ENCODE measurements at regions of chr2 and their contacts with region 1.

Region 1: GRCh38 chr2:190648289-190649034 is 421 bp upstream of the NAB1 start:
- DNase-seq: peak; percentile 91 to 94
- ATAC-seq: peak; percentile 93 to 97 (median 96)
- H3K4me3 ChIP-seq: peak overlapping the region; percentile 79 to 95 (median 90)
- H3K27ac ChIP-seq: peak overlapping the region; percentile 71 to 99 (median 96)
- H3K4me1 ChIP-seq: peaks cover 0 to 74% (median 32%) of the 10 kb centered on the region in 9 donors
- H3K27me3 ChIP-seq: no peaks in the 10 kb centered on the region
- CTCF ChIP-seq: no peak

Region 2: DNA sequence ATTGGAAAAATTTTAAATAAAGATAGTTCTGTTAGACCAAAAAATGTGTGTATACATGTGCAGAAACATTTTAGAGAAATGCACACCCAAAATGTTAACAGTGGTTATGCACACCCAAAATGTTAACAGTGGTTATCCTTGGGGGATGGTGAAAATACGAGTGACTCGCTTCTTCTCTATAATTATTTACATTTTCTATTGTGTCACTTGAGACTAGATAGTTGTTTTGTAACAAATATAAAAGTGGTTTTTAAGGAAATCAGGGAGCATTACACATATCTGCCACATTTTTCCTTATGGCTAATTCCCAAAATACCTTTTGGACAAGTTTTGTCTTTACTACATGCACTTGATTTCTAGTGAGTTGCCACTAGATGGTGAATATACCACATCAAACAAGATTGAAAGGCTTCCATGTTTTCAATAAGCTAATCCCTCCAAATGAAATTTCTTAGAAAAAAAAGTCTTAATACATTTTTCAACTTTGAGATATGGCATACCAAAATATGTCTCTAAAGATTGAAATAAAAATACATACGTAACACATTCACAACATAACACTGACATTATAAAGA is 319.8 kb before region 1 on chr2:
- intact Hi-C with region 1: no loop called
- DNase-seq: no peak
- ATAC-seq: no peak
- H3K4me3 ChIP-seq: no peak overlapping the region
- H3K27ac ChIP-seq: no peak overlapping the region
- H3K4me1 ChIP-seq: peaks cover 0 to 6% (median 0%) of the 10 kb centered on the region in 9 donors
- H3K27me3 ChIP-seq: no peaks in the 10 kb centered on the region
- CTCF ChIP-seq: peak in 8 of 9 donors; percentile 10 to 52 (median 30)

Region 3: DNA sequence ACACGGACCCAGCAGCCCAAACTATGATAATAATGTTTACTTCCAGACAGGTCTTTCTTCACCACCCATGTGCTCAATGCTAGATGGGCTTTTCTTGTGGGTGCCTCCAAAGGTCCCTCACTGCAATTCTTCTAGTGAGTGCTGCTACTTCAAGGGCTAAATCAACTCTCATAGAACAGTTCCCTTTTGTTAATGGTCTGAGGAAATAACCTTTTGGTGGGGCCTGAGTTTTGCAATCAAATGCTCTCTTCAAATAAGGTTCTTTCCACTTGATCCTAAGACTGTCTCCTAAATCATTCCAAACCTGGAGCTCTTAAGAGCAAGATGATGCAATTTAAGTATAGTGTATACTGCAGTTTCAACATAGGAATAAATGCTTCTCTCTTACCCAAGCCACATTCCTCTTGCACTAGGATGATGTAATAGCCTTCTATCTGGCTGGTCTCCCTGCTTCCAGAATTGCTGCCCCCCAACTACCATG is 119.9 kb before region 1 on chr2:
- intact Hi-C with region 1: loop called in 6 of 10 experiments (anchors 5 to 10 kb)
- DNase-seq: no peak
- ATAC-seq: peak in 1 of 8 donors; percentile 32
- H3K4me3 ChIP-seq: no peak overlapping the region
- H3K27ac ChIP-seq: no peak overlapping the region
- H3K4me1 ChIP-seq: peaks cover 0 to 52% (median 32%) of the 10 kb centered on the region in 9 donors
- H3K27me3 ChIP-seq: no peaks in the 10 kb centered on the region
- CTCF ChIP-seq: no peak

Region 4: DNA sequence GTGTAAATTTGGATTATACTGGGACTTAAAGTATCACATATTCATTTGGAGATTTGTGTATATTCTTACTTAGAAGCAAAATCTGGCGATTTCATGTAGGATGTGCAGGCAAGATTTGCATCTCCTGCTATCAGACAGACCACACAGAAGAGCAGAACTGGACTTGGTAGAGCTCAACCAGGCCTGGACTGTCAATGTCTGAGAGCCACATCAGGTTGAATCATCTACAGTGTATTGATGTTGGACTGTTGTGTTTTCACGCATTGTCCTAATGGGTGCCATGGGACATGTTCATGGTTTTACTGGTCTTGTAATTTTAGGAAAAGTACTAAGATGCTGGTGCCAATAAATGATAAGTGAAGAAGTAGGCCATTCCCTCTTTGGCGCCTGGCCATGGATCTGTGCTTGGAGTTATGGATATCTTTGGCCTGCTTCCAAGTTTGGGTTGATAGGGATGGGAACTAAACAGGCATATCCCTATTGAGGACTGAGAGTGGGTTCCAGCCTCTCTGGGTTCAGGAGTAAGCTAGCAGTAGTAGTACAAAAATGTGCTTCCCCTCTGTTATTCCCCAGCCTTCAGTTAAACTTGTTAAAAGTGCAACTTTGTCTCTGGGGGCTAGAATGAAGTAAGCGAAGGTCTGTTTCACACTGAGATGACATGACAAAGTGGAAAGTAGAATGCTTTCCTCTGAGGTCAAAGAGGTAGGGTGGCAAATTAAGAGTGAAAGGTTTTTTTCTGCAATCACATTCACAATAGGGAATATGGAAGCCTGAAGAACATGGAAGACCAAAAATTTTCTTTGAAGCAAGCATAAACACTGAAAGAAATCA is 64.7 kb before region 1 on chr2:
- intact Hi-C with region 1: loop called in 2 of 10 experiments (anchors 5 to 10 kb)
- DNase-seq: peak; percentile 66 to 72
- ATAC-seq: peak; percentile 35 to 63 (median 53)
- H3K4me3 ChIP-seq: no peak overlapping the region
- H3K27ac ChIP-seq: peak overlapping the region in 8 of 10 donors; percentile 6 to 75 (median 58)
- H3K4me1 ChIP-seq: peaks cover 6 to 56% (median 32%) of the 10 kb centered on the region in 9 donors
- H3K27me3 ChIP-seq: no peaks in the 10 kb centered on the region
- CTCF ChIP-seq: no peak

Region 5: DNA sequence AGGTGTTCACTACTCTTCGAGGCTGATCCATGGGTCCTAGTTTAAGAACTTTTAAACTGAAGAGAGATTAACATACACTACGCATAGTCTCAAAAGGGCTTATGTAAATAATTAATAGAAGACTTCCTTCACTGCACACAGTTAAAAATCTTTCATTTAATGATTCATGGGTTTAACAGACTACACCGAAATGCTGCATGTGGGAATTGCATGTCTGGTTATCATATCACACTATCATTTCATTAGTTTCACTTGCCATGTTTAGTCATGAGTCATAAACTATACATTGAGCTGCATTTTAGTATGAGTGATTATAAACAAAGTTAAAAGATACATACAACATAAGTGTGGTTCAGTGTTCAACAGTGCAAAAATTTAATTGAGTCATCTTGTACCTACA is 263.4 kb after region 1 on chr2:
- intact Hi-C with region 1: no loop called
- DNase-seq: no peak
- ATAC-seq: no peak
- H3K4me3 ChIP-seq: no peak overlapping the region
- H3K27ac ChIP-seq: no peak overlapping the region
- H3K4me1 ChIP-seq: peaks cover 0 to 9% (median 0%) of the 10 kb centered on the region in 9 donors
- H3K27me3 ChIP-seq: no peaks in the 10 kb centered on the region
- CTCF ChIP-seq: no peak

Measured in heart right ventricle (tissue), 16 donors.